Right cardiac atrium (tissue), 5 donors: ENCODE measurements at regions of chr10 and their contacts with region 1.

Region 1: GRCh38 chr10:31340343-31340742 is 21.3 kb downstream of the ZEB1 start:
- DNase-seq: no peak
- ATAC-seq: no peak
- H3K4me3 ChIP-seq: no peak overlapping the region
- H3K27ac ChIP-seq: no peak overlapping the region
- H3K4me1 ChIP-seq: peaks cover 2% of the 10 kb centered on the region
- H3K27me3 ChIP-seq: no peaks in the 10 kb centered on the region

Region 2: DNA sequence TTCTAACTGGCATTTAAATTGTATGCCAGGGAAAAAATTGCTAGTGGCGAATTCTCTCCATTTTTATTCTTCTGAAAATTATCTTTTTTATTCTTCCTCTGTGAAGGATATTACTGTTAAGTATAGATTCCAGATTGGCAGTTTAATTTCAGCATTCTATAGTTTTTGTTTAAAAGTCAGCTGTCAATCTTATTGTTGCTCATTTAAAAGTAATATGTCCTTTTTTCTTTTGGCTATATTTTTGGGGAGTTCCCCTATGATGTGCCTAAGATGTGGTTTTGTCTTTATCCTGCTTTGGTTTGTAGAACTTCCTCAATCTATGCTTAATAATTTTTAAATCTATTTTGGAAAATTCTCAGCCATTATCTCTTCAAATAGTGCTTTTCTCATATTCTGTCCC is 452.4 kb after region 1 on chr10:
- intact Hi-C with region 1: loop called in 1 of 4 experiments (anchors 10 kb)
- DNase-seq: no peak
- ATAC-seq: no peak
- H3K4me3 ChIP-seq: no peak overlapping the region
- H3K27ac ChIP-seq: no peak overlapping the region
- H3K4me1 ChIP-seq: no peaks in the 10 kb centered on the region
- H3K27me3 ChIP-seq: no peaks in the 10 kb centered on the region